Head of caudate nucleus (tissue), 42 donors: ENCODE measurements at regions of chr3 and their contacts with region 1.

Region 1: DNA sequence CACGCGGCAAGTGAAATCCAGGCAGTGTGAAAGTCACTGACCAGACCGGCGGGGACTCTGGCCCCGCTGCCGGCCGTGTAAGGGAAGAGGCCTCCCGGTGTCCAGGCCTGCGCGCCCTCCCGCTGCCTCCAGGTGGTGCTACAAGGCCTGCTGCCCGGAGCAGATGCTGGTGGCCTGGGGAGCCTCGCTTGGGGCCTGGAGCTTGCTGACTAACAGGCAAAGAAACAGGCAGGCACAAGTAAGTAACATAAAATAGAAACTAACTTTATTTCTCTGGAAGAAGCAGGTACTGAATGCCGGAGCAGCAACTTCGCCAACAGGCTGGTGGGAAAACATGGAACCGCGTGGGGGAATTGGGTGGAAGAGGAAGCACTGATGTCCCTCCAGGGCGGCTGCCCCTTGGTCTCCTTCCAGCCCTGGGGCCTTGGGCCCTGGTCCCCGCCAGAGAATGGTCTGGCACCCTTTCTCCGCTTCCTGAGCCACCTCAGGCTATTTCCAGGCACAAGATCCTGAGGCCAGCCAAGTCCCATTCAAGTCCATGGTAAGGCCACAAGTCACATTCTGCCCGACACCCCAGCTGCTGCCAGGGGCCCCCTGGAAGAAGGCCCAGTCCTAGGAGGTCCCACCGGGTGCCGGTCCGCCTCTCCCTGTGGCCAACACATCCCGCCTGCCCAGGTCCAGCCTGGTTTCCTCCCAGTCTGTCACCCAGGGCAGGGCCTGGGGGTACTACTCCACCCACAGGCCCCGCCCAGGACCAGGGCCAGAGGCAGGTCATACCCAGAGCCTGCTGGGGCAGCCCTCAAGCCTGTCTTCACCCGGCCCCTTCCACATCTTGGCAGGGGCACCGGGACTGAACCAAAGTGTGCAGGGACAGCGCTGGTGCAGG is 45.0 kb downstream of the TNK2 start:
- DNase-seq: peak; percentile 84 to 97 (median 92)

Region 2: GRCh38 chr3:195207731-195208585 is 655.4 kb before region 1 on chr3:
- intact Hi-C with region 1: no loop called
- DNase-seq: peak in 6 of 42 donors; percentile 5 to 39 (median 25)

Region 3: GRCh38 chr3:195894780-195895607 is 31.6 kb after region 1 on chr3:
- intact Hi-C with region 1: loop called (anchors 1 kb)
- DNase-seq: peak in 35 of 42 donors; percentile 41 to 91 (median 66)

Region 4: GRCh38 chr3:195909644-195910508 is 46.5 kb after region 1 on chr3:
- intact Hi-C with region 1: loop called (anchors 5 kb)
- DNase-seq: peak; percentile 66 to 96 (median 91)

Region 5: GRCh38 chr3:196988241-196989029 is 1125.1 kb after region 1 on chr3:
- intact Hi-C with region 1: no loop called
- DNase-seq: peak in 1 of 42 donors; percentile 18